ENCODE measurements at regions of chr7 and their contacts with region 1.

Region 1: GRCh38 chr7:84336303-84336702 is 141.7 kb upstream of the SEMA3A start:
- DNase-seq: no peak
- H3K4me3 ChIP-seq: no peak overlapping the region
- CTCF ChIP-seq: no peak
- POLR2A ChIP-seq: no peak

Region 2: GRCh38 chr7:82841828-82842227 is 1494.5 kb before region 1 on chr7:
- intact Hi-C with region 1: loop called (anchors 10 kb)
- DNase-seq: no peak
- H3K4me3 ChIP-seq: no peak overlapping the region
- CTCF ChIP-seq: no peak
- POLR2A ChIP-seq: no peak

Region 3: DNA sequence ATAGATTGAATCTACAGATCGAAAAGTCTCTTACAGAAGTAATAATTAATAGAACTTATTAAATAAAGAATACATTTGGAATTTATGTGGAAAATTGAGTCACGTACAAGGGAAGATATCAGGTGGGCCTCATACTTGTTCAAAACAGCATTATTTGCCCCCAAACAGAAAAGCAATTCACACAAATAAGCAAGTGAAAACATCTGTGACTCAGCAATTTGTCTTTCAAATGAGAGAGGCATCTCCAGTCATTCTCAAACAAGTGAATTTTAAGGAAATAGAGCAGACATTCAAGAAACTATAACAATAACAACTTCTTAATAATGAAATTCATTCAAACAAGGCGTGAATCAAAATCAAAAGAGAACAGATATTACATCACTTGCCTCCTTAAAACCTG is 191.8 kb before region 1 on chr7:
- intact Hi-C with region 1: no loop called
- DNase-seq: no peak
- H3K4me3 ChIP-seq: no peak overlapping the region
- CTCF ChIP-seq: no peak
- POLR2A ChIP-seq: no peak